MCF 10A (cell line): ENCODE measurements at regions of chr12 and their contacts with region 1.

Region 1: DNA sequence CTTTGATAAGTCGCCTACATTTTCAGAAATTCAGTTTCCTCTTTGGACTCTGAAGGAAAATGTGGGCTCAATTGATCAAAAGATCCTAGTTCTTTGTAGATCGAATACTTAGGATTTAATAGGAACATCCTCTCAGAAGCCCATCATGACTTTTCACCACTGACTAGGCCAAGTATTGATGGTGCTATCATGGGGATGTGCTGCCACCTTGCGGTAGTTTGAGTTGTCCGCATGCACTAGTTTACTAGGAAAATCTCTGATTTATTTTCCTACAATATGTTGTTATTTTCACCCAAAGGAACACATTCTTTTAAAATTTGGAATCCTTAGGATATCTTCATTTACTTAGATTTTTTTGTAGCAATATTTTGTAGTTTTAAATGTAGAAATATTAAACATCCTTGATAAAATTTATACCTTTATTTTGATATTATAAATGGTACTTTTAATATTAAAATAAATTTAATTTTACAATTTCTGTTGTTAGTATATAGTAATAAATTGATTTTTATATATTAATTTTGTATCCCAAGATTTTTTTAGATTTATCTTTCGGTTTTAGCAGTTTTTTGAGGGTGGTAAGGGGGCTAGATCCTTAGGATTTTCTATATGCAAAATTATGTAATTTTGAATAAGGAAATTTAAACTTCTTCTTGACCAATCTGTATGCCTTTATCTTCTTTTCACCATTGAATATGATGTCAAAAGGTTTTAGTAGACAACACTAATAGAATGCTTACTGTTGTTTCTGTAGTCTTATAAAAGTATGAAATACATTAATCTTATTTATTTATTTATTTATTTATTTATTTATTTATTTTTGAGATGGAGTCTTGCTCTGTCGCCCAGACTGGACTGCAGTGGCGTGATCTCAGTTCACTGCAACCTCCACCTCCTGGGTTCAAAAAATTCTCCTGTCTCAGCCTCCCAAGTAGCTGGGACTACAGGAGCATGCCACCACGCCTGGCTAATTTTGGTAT is 52.9 kb upstream of the OR9K2 start:
- DNase-seq: peak; percentile 78
- H3K4me3 Mint-ChIP-seq: no peak overlapping the region
- H3K27ac Mint-ChIP-seq: no peak overlapping the region
- H3K4me1 Mint-ChIP-seq: no peaks in the 10 kb centered on the region
- H3K27me3 Mint-ChIP-seq: peaks cover 45% of the 10 kb centered on the region
- CTCF ChIP-seq: peak; percentile 73

Region 2: DNA sequence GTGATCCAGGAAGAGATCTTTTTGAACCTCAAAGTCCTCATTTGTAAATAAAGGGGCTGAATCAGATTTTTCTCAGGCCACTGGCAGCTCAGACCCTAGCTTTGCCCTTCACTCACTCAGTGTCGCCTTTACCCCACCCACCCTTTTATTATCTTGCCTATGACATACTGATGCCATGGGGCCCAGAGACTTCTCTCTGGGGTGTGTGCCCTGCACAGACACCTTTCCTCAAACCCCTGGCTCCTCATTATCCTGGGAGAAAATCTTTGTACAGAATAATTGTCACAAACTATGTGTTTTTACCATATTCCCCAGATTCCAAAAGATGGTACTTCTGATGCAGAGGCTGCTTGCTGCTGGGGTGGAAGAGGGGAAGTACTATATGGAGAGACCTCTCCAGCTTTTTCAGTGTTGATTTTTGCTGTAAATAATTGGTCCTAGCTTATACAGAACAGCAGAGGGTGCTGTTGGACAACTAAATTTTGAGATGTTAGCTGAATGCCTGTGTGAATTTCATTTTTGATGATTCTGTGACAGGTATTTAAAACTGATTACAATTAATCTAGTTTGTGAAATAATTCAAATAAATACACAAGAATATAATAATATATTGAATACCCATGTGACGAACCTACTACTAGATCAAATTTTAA is 371.3 kb before region 1 on chr12:
- CTCF ChIA-PET with region 1: interaction called, 18 read pairs
- POLR2A ChIA-PET with region 1: no interaction called
- intact Hi-C with region 1: loop called (anchors 2 kb)
- DNase-seq: peak; percentile 60
- H3K4me3 Mint-ChIP-seq: no peak overlapping the region
- H3K27ac Mint-ChIP-seq: no peak overlapping the region
- H3K4me1 Mint-ChIP-seq: no peaks in the 10 kb centered on the region
- H3K27me3 Mint-ChIP-seq: peaks cover 75% of the 10 kb centered on the region
- CTCF ChIP-seq: peak; percentile 45

Region 3: DNA sequence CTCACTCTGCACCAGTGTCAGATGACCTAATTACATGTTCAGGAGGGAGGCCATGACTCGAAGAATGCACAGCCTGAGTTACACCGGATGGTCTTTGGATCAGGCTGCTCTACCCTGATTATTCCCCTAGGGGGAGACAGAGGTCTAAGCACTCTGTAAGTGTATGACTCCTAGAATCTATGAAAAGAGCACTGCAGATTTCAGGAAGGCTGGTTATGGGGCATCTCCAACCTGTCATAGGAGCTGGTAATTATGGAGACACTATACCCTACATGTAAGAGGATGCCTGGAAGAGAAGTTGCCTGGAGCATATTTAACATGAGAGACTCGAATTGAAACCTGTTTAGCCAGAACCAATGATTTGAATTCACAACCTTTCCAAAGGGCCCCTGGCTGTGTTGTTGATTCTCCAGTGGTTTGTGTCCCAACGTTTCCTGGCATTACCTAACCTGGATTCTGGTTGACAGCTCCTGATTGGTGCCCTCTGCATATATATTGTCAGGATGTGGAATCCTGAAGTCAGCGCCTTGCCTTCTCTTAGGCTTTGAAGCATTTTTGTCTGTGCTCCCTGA is 219.3 kb before region 1 on chr12 and contains the start of gene MUCL1:
- CTCF ChIA-PET with region 1: interaction called, 4 read pairs
- POLR2A ChIA-PET with region 1: no interaction called
- intact Hi-C with region 1: loop called (anchors 5 kb)
- DNase-seq: peak; percentile 83
- H3K4me3 Mint-ChIP-seq: no peak within 1 kb of the TSS
- H3K27ac Mint-ChIP-seq: no peak within 1 kb of the TSS
- H3K4me1 Mint-ChIP-seq: no peaks in the 10 kb centered on the region
- H3K27me3 Mint-ChIP-seq: no peaks in the 10 kb centered on the region
- CTCF ChIP-seq: peak; percentile 86
- total RNA-seq, gene MUCL1: not detected in 2 replicates

Region 4: GRCh38 chr12:54993161-54993835 is 80.0 kb before region 1 on chr12:
- CTCF ChIA-PET with region 1: interaction called, 233 read pairs
- POLR2A ChIA-PET with region 1: interaction called, 4 read pairs
- intact Hi-C with region 1: loop called (anchors 1 kb)
- DNase-seq: peak; percentile 74
- H3K4me3 Mint-ChIP-seq: no peak overlapping the region
- H3K27ac Mint-ChIP-seq: no peak overlapping the region
- H3K4me1 Mint-ChIP-seq: peaks cover 5% of the 10 kb centered on the region
- H3K27me3 Mint-ChIP-seq: peaks cover 76% of the 10 kb centered on the region
- CTCF ChIP-seq: peak; percentile 78

Region 5: GRCh38 chr12:55060470-55060869 is 12.9 kb before region 1 on chr12:
- CTCF ChIA-PET with region 1: interaction called, 15 read pairs
- POLR2A ChIA-PET with region 1: no interaction called
- intact Hi-C with region 1: no loop called
- DNase-seq: peak; percentile 27
- H3K4me3 Mint-ChIP-seq: no peak overlapping the region
- H3K27ac Mint-ChIP-seq: no peak overlapping the region
- H3K4me1 Mint-ChIP-seq: no peaks in the 10 kb centered on the region
- H3K27me3 Mint-ChIP-seq: peaks cover 99% of the 10 kb centered on the region
- CTCF ChIP-seq: no peak

Region 6: GRCh38 chr12:55642669-55643068 is 569.3 kb after region 1 on chr12:
- CTCF ChIA-PET with region 1: no interaction called
- POLR2A ChIA-PET with region 1: no interaction called
- intact Hi-C with region 1: no loop called
- DNase-seq: no peak
- H3K4me3 Mint-ChIP-seq: no peak overlapping the region
- H3K27ac Mint-ChIP-seq: no peak overlapping the region
- H3K4me1 Mint-ChIP-seq: no peaks in the 10 kb centered on the region
- H3K27me3 Mint-ChIP-seq: peaks cover 28% of the 10 kb centered on the region
- CTCF ChIP-seq: no peak